Mammary epithelial cell (primary cell): ENCODE measurements at regions of chr17 and their contacts with region 1.

Region 1: GRCh38 chr17:19362277-19363113 is at the start of gene B9D1:
- DNase-seq: peak; percentile 88
- H3K4me3 ChIP-seq: peak within 1 kb of the TSS; percentile 73 to 87 (median 77)
- H3K27ac ChIP-seq: peak within 1 kb of the TSS; percentile 73
- H3K4me1 ChIP-seq: peaks cover 20% of the 10 kb centered on the region
- H3K27me3 ChIP-seq: no peaks in the 10 kb centered on the region
- CTCF ChIP-seq: peak; percentile 77 to 94
- total RNA-seq, gene B9D1: 21.2 to 23.2 TPM

Region 2: DNA sequence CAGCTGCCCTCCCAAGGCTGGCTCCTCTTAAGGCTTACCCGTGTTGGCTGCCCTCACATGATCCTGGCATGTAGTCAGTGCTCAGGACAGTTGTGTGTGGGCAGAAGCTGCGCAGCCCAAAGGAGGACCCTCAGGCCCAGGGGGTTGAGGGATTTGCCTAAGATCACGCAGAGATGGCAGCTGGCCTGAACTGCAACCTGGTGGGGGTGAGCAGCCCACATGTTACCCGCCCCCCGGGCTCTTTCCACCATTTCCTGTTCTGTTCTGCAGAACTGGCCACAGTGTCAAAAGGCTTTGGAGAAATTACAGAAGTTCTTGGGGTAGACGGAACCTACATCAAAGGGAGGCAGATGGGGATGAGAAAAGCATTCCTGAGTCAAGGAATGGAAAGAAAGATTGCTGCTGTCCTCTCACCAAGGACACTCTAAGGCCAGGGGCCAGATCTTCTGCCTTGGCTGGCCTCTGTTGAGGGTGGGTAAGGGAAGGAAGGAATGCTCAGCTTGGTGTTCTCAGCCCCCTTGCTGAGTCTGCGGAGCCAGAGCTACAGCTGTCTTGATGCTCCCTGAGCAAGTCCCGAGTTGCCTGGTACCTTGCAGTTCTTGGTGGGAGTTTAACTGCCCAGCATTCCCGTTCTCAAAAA is 72.3 kb before region 1 on chr17:
- CTCF ChIA-PET with region 1: no interaction called
- dilution Hi-C with region 1: loop called (anchors 5 kb)
- in situ Hi-C with region 1: no loop called
- intact Hi-C with region 1: no loop called
- DNase-seq: no peak
- H3K4me3 ChIP-seq: no peak overlapping the region
- H3K27ac ChIP-seq: no peak overlapping the region
- H3K4me1 ChIP-seq: peaks cover 4% of the 10 kb centered on the region
- H3K27me3 ChIP-seq: no peaks in the 10 kb centered on the region
- CTCF ChIP-seq: no peak

Region 3: GRCh38 chr17:19447085-19447583 is 84.6 kb after region 1 on chr17:
- CTCF ChIA-PET with region 1: interaction called, 9 read pairs
- dilution Hi-C with region 1: no loop called
- in situ Hi-C with region 1: loop called (anchors 5 kb)
- intact Hi-C with region 1: loop called (anchors 1 kb)
- DNase-seq: peak; percentile 46
- H3K4me3 ChIP-seq: no peak overlapping the region
- H3K27ac ChIP-seq: no peak overlapping the region
- H3K4me1 ChIP-seq: peaks cover 6% of the 10 kb centered on the region
- H3K27me3 ChIP-seq: no peaks in the 10 kb centered on the region
- CTCF ChIP-seq: peak; percentile 75 to 84

Region 4: GRCh38 chr17:19507775-19508576 is 145.5 kb after region 1 on chr17:
- CTCF ChIA-PET with region 1: no interaction called
- dilution Hi-C with region 1: no loop called
- in situ Hi-C with region 1: loop called in 1 of 2 experiments (anchors 10 kb)
- intact Hi-C with region 1: loop called (anchors 1 kb)
- DNase-seq: peak; percentile 86
- H3K4me3 ChIP-seq: peak overlapping the region; percentile 58 to 79 (median 58)
- H3K27ac ChIP-seq: no peak overlapping the region
- H3K4me1 ChIP-seq: no peaks in the 10 kb centered on the region
- H3K27me3 ChIP-seq: no peaks in the 10 kb centered on the region
- CTCF ChIP-seq: peak in 1 of 2 donors; percentile 9

Region 5: DNA sequence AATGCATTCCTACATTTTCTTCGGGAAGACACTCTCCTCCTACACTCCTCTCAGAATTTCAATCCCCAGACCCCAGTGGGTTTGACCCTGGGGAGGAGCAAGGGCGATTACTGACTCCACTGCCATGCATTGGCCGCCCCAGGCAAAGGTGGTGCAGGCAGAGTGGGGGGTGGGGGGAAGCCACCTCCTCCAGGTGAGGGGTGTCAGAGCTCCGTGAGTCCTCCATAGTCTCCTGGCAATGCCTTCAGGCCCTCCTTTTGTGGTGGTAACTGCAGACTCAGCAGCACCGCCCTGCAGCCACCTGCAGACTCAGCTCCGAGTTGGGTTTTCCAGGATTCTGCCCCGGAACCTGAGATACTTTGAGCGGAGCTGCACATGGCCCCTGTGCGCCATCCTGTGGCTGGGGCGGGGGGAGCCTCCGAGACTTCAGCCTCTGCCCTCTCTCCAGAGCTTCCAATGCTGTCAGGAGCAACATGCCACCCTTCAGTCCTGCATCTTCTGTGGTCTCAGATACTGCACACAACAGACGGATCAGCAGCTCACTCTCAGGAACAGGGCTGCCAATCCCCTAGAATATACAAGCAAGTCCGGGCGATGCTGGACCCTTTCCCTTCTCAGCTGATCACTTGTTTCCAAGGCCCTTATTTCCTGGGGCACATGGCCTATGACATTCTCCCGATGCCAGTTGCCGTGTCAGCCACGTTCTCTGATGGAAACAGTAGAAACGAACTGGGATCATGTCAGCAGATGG is 356.3 kb after region 1 on chr17:
- CTCF ChIA-PET with region 1: no interaction called
- dilution Hi-C with region 1: no loop called
- in situ Hi-C with region 1: no loop called
- intact Hi-C with region 1: loop called (anchors 1 kb)
- DNase-seq: peak; percentile 23
- H3K4me3 ChIP-seq: no peak overlapping the region
- H3K27ac ChIP-seq: peak overlapping the region; percentile 45
- H3K4me1 ChIP-seq: peaks cover 50% of the 10 kb centered on the region
- H3K27me3 ChIP-seq: no peaks in the 10 kb centered on the region
- CTCF ChIP-seq: peak; percentile 49 to 75